MCF 10A (cell line): ENCODE measurements at regions of chr5 and their contacts with region 1.

Region 1: DNA sequence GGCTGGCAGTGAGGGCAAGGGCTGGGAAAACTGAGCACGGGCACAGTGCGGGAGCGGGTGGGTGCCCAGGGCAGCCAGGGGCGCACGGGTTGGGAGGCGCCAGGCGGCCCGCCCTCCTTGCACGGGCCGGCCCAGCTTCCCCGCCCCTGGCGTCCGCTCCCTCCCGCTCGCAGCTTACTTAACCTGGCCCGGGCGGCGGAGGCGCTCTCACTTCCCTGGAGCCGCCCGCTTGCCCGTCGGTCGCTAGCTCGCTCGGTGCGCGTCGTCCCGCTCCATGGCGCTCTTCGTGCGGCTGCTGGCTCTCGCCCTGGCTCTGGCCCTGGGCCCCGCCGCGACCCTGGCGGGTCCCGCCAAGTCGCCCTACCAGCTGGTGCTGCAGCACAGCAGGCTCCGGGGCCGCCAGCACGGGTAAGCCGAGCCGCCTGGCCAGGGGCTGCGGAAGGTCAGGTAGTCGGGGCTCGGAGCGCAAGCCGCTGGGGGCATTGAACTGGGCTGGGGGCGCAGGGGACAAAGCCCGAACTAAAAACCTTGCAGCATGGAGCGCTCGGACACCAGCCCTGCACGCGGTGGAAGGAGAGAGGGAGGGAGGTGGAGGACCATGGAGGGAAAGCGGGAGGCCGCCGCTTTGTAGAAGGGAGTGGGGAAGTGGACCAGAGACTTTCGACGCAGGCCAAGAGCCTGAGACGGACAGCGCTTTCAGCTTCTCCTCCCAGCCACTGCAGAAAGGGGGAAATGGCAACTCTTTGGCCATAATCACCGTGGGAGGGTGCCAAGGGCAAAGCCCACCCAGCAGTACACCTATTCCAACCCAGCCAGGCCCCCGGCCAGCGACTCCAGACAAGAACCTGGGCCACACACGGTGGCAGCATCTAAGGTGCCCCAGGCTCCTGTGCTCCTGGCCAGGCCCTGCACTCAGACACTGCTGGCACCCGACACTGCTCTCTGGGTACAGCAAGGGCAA is at the start of gene TGFBI:
- DNase-seq: peak; percentile 87
- H3K4me3 Mint-ChIP-seq: peak within 1 kb of the TSS; percentile 80
- H3K27ac Mint-ChIP-seq: peak within 1 kb of the TSS; percentile 76
- H3K4me1 Mint-ChIP-seq: peaks cover 57% of the 10 kb centered on the region
- H3K27me3 Mint-ChIP-seq: no peaks in the 10 kb centered on the region
- CTCF ChIP-seq: no peak
- total RNA-seq, gene TGFBI: 623 and 892 TPM in 2 replicates

Region 2: GRCh38 chr5:135690466-135690865 is 338.6 kb before region 1 on chr5:
- CTCF ChIA-PET with region 1: no interaction called
- POLR2A ChIA-PET with region 1: no interaction called
- intact Hi-C with region 1: no loop called
- DNase-seq: no peak
- H3K4me3 Mint-ChIP-seq: no peak overlapping the region
- H3K27ac Mint-ChIP-seq: no peak overlapping the region
- H3K4me1 Mint-ChIP-seq: peaks cover 6% of the 10 kb centered on the region
- H3K27me3 Mint-ChIP-seq: no peaks in the 10 kb centered on the region
- CTCF ChIP-seq: no peak

Region 3: DNA sequence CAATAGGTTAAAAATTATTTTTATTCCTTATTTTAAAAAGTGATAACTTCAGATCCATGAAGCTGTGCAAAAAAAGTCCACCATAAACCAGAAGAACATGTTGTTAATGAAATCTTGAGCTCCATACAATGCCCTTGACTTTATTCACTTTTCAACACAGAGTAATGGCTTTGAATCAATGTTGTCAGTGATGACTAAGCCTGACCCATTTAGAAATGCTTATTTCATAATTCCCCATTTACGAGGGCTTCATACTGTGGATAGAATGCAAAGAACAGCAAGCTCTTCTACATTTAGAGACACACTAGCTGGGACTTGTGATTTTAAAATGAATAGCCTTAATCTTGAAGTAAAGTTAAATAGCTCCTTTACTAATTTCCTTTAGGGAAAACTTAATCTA is 107.7 kb before region 1 on chr5:
- CTCF ChIA-PET with region 1: no interaction called
- POLR2A ChIA-PET with region 1: interaction called, 10 read pairs
- intact Hi-C with region 1: no loop called
- DNase-seq: peak; percentile 72
- H3K4me3 Mint-ChIP-seq: no peak overlapping the region
- H3K27ac Mint-ChIP-seq: no peak overlapping the region
- H3K4me1 Mint-ChIP-seq: no peaks in the 10 kb centered on the region
- H3K27me3 Mint-ChIP-seq: peaks cover 84% of the 10 kb centered on the region
- CTCF ChIP-seq: no peak

Region 4: GRCh38 chr5:135955525-135955924 is 73.5 kb before region 1 on chr5:
- CTCF ChIA-PET with region 1: interaction called, 3 read pairs
- POLR2A ChIA-PET with region 1: interaction called, 14 read pairs
- intact Hi-C with region 1: no loop called
- DNase-seq: no peak
- H3K4me3 Mint-ChIP-seq: no peak overlapping the region
- H3K27ac Mint-ChIP-seq: no peak overlapping the region
- H3K4me1 Mint-ChIP-seq: no peaks in the 10 kb centered on the region
- H3K27me3 Mint-ChIP-seq: no peaks in the 10 kb centered on the region
- CTCF ChIP-seq: no peak

Region 5: DNA sequence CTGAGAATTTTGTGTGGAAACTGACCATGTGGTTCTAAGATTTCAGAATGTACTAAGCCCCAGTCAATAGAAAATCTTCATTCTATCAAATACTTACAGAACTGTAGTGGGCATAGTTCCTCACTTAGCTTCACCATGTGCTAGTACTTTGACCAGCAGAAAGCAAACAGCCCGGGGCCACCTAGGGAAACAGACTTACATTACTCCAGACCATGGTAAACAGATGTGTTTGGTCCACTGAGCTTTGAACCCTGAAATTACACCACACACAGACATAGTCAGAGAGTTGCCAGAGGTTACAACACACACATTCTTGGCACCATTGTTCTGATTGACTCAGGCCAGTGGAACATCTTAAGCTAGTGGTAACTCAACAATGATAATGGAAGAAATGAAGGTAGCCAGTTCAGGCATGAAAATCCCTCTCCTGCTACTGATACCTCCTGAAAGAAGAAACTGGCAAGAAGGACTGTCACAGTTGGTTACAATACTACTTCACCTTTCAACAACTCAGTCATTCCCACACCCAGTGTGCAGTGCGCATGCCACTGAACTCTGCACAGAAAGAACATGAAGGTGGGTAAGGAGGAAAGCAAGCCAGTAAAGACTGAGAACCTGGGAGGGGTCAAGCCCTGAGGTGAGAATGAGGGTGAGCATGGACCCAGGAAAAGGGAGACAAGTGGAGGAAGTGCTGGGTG is 55.6 kb before region 1 on chr5:
- CTCF ChIA-PET with region 1: interaction called, 5 read pairs
- POLR2A ChIA-PET with region 1: interaction called, 11 read pairs
- intact Hi-C with region 1: no loop called
- DNase-seq: peak; percentile 94
- H3K4me3 Mint-ChIP-seq: no peak overlapping the region
- H3K27ac Mint-ChIP-seq: no peak overlapping the region
- H3K4me1 Mint-ChIP-seq: peaks cover 23% of the 10 kb centered on the region
- H3K27me3 Mint-ChIP-seq: no peaks in the 10 kb centered on the region
- CTCF ChIP-seq: no peak

Region 6: DNA sequence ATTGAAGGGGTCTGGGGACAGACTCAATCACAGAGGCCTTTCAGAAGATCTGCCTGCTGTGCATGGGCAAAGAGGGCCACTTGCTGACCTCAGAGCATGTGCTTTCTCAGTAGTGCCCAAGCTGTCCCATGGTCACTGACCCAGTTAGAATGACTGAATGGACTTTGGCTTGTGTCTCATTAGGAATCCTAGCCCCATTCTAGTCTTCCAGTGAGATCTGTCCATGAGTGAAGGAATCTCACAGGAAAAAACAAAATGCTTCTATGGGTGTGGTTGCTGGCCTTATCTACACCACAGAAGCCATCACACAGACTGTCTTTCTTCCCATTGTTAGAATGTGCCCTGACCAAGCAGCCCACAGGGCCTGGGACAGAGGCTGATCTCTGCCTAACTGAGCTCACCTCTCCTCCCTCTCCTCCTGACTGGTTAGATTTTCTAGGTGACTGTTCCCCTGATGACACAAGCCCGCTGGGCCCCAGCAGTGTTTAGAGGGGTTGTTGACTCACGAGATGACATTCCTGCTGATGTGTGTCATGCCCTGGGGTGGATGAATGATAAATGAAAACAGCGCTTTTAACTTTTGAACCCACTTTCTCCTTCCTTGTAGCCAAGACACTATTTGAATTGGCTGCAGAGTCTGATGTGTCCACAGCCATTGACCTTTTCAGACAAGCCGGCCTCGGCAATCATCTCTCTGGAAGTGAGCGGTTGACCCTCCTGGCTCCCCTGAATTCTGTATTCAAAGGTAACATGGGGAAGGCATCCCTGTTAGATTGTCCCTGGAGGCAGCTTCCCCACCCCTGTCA is 24.5 kb after region 1 on chr5:
- CTCF ChIA-PET with region 1: interaction called, 16 read pairs
- POLR2A ChIA-PET with region 1: interaction called, 364 read pairs
- intact Hi-C with region 1: loop called (anchors 1 kb)
- DNase-seq: peak; percentile 98
- H3K4me3 Mint-ChIP-seq: no peak overlapping the region
- H3K27ac Mint-ChIP-seq: peak overlapping the region; percentile 85
- H3K4me1 Mint-ChIP-seq: peaks cover 52% of the 10 kb centered on the region
- H3K27me3 Mint-ChIP-seq: no peaks in the 10 kb centered on the region
- CTCF ChIP-seq: no peak

Region 7: DNA sequence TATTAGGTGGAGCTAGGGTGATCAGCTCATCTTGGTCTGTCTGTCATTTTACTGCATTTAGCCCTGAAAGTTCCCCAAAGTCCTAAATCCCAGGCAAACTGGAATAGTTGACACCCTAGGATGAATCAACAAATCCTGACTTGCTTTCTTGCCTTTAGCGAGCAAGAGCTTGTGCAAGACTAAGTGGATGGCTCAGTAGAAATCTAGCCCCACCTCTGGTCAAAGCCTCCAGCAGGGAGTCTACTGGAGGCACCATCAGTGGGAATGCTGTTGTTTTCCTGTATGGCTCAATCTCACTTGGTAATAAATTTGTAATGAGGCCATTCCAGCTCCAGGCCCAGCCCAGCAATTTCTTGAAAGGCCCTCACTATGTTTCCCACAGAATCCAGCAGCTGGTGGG is 379.9 kb after region 1 on chr5:
- CTCF ChIA-PET with region 1: no interaction called
- POLR2A ChIA-PET with region 1: no interaction called
- intact Hi-C with region 1: no loop called
- DNase-seq: peak; percentile 25
- H3K4me3 Mint-ChIP-seq: no peak overlapping the region
- H3K27ac Mint-ChIP-seq: no peak overlapping the region
- H3K4me1 Mint-ChIP-seq: no peaks in the 10 kb centered on the region
- H3K27me3 Mint-ChIP-seq: peaks cover 15% of the 10 kb centered on the region
- CTCF ChIP-seq: no peak